Motor neuron (in vitro differentiated cells): ENCODE measurements at regions of chr19 and their contacts with region 1.

Region 1: DNA sequence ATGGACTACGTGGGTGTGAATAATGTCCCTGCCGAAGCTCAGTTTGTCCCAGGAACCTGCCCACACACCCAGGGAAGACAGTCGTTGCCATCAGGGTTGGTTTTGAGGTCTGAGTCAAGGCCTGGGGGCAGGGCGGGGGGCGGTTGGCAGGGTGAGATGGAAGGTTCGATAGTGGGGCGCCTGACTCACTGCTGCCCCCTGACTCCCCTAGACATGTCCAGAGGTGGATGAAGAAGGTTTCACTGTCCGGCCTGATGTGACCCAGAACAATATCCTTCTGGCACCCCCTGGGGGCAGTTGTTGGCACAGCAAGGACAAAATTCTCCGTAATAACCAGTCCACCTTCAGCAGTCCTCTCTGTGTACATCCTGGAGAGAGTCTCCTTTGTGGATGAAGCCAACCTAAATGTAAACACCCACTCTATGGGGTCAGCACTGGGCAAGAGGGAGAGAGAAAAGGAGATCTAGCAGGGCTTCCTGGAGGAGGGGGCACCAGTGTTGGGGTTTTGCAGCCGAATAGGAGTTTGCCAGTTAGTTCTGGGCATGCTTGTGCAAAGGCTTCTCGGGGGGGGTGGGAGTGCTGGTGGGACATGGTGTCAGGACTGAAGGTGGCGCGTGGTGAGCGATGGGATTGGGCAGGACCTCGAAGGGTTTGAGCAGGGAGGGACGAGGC is 19.6 kb upstream of the B3GNT3 start:
- ATAC-seq: peak in 5 of 8 experiments; percentile 4 to 49 (median 29)
- H3K4me3 ChIP-seq: no peak overlapping the region
- H3K27ac ChIP-seq: no peak overlapping the region
- H3K4me1 ChIP-seq: peaks cover 11 to 13% of the 10 kb centered on the region in 2 donors

Region 2: DNA sequence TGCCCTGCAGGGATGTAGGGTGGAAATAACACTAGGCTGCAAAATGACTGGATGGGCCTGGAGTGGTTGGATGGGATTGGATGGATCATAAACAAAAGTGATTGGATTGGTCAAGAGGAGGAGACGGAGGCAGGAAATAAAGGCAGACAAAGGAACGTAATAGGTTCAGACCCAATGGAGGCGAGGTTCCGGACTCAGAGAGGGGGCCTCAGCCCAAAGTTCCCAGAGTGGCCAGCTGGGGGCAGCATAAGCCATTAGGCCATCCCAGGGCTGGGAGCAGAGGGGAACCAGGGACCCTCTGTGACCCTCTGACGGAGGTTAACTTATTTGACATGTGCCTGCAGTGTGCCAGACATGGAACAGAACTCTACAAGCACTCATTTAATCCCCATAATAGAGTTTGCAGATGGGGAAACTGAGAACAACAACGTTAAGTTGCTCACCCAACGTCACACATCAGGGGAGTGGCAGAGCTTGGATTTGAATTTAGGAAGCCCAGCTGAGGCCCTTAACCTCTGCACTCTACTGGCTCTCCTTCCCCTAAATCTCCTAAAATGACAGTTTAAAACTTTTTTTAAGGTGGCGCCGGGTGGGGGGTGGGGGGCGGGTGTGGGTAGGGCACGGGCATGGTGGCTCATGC is 71.4 kb before region 1 on chr19:
- in situ Hi-C with region 1: loop called in 1 of 9 experiments (anchors 10 kb)
- ATAC-seq: peak in 4 of 8 experiments; percentile 55 to 91 (median 82)
- H3K4me3 ChIP-seq: no peak overlapping the region
- H3K27ac ChIP-seq: no peak overlapping the region
- H3K4me1 ChIP-seq: no peaks in the 10 kb centered on the region

Region 3: DNA sequence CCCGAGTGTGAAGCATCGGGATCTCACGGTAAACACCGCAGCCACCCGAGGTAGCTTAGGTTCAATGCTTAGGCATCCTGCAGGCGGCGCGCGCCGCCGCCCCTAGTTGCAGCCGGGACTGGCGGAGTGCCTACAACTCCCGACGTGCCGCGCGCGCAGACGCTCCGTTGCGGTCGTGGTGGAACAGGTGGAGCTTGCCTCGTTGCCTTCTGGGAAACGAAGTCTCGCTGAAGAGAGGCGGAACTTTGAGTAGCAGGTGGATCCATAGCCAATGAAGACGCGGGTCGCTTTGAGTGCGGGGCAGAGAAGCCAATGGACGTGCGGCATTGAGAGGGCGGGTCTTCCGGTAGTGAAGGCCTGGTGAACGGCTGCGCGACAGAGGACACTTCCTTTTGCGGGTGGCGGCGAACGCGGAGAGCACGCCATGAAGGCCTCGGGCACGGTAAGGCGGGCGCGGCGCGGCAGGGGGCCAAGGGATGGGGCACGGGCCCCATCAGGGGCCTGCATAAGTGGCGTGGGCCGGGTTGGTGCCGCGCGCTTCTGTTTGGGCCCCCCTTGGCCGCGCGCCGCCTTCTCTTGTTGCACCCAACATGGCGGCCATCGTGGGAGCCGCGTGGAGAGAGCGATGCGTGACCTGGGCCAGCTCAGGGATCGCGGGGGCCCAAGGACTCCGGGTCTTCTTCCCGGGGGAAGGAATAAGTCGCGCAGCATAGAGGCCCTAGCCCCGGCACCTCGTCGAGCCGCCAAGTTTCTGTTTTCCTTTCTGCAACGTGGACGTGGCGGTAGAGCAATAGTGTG is 84.4 kb after region 1 on chr19 and contains the start of gene RPL18A:
- in situ Hi-C with region 1: loop called in 1 of 9 experiments (anchors 10 kb)
- ATAC-seq: peak; percentile 84 to 95 (median 93)
- H3K4me3 ChIP-seq: peak within 1 kb of the TSS; percentile 82 to 97 (median 90)
- H3K27ac ChIP-seq: peak within 1 kb of the TSS; percentile 74 to 95
- H3K4me1 ChIP-seq: peaks cover 10 to 11% of the 10 kb centered on the region in 2 donors
- total RNA-seq, gene RPL18A: 1,644 to 3,505 (median 2,481) TPM